ENCODE measurements at regions of chr3 and their contacts with region 1.

Region 1: GRCh38 chr3:113293348-113293747 is 82.0 kb downstream of the BOC start:
- DNase-seq: no peak
- ATAC-seq: no peak
- H3K4me3 ChIP-seq: no peak overlapping the region
- H3K4me3 Mint-ChIP-seq: no peak overlapping the region
- H3K27ac ChIP-seq: no peak overlapping the region
- H3K27ac Mint-ChIP-seq: no peak overlapping the region
- H3K4me1 ChIP-seq: no peaks in the 10 kb centered on the region
- H3K4me1 Mint-ChIP-seq: no peaks in the 10 kb centered on the region
- H3K27me3 ChIP-seq: no peaks in the 10 kb centered on the region
- H3K27me3 Mint-ChIP-seq: no peaks in the 10 kb centered on the region

Region 2: GRCh38 chr3:113051302-113051711 is 242.0 kb before region 1 on chr3:
- CTCF ChIA-PET with region 1: interaction called, 8 to 11 read pairs
- POLR2A ChIA-PET with region 1: no interaction called
- DNase-seq: peak; percentile 61 to 88 (median 80)
- ATAC-seq: peak; percentile 98 to 100 (median 99)
- H3K4me3 ChIP-seq: no peak overlapping the region
- H3K4me3 Mint-ChIP-seq: no peak overlapping the region
- H3K27ac ChIP-seq: no peak overlapping the region
- H3K27ac Mint-ChIP-seq: no peak overlapping the region
- H3K4me1 ChIP-seq: peaks cover 5 to 7% of the 10 kb centered on the region in 2 experiments
- H3K4me1 Mint-ChIP-seq: peaks cover 0 to 8% (median 3%) of the 10 kb centered on the region in 3 donors
- H3K27me3 ChIP-seq: no peaks in the 10 kb centered on the region
- H3K27me3 Mint-ChIP-seq: no peaks in the 10 kb centered on the region

Region 3: DNA sequence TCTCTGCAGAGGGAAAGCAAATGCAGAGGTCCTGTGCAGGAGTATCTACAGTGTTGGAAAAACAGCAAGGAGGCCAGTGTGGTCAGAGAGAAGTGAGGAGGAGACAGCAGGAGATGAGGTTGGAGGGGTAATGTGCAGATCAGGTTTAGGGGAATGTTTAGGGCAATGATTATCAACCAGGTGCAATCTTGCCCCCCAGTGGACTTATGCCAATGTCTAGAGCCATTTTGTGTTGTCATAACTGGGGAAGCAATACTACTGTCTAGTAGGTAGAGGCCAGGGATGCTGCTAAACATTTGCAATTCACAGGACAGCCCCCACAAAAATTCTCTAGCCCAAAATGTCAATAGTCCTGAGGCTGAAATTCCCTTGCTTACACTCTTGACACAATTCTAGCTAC is 749.9 kb after region 1 on chr3:
- CTCF ChIA-PET with region 1: no interaction called
- POLR2A ChIA-PET with region 1: no interaction called
- DNase-seq: no peak
- ATAC-seq: no peak
- H3K4me3 ChIP-seq: no peak overlapping the region
- H3K4me3 Mint-ChIP-seq: no peak overlapping the region
- H3K27ac ChIP-seq: no peak overlapping the region
- H3K27ac Mint-ChIP-seq: no peak overlapping the region
- H3K4me1 ChIP-seq: no peaks in the 10 kb centered on the region
- H3K4me1 Mint-ChIP-seq: no peaks in the 10 kb centered on the region
- H3K27me3 ChIP-seq: no peaks in the 10 kb centered on the region
- H3K27me3 Mint-ChIP-seq: no peaks in the 10 kb centered on the region

Measured in T-cell (primary cell).